ENCODE measurements at regions of chr13 and their contacts with region 1.

Region 1: DNA sequence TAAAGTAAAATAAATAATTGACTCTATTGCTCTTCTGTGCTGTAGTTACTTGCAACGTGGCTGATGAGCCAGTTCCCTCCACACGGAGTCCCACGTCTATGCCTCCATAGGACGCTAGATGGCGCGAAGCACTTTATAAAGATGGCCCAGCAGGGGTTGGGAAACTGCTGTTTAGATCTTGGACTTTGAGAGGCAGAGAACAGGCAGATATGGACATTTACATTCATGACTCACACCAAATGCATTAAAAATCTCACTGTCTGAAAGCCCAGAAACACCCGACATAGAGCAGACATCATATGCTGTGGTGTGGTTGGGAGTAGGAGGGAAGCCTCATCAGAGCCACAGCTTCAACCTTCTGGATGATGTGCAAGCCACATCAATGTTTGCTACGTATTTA is 643.1 kb upstream of the ARGLU1 start:
- DNase-seq: peak; percentile 59
- H3K4me3 ChIP-seq: no peak overlapping the region
- H3K27ac ChIP-seq: no peak overlapping the region
- H3K4me1 ChIP-seq: no peaks in the 10 kb centered on the region
- H3K27me3 ChIP-seq: no peaks in the 10 kb centered on the region
- CTCF ChIP-seq: peak; percentile 93 to 95

Region 2: DNA sequence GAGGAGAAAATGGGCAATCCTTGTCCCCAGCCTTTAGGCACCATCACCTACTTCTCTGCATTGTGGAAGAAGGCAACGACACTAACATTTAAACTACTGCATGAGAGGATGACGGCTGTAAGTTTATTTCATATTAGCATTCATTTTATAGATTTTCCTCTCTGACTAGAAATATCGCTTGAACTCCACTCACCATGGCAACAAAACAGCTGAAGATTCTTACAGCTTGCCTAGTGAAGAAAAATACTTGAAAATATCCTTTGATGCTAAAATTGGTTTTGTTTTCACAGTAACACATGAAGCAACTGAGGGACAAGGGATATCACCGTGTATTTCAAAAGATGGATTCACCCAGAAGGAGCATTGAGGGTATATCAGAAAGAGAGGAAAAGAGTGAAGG is 720.0 kb after region 1 on chr13:
- CTCF ChIA-PET with region 1: no interaction called
- dilution Hi-C with region 1: no loop called
- in situ Hi-C with region 1: no loop called
- intact Hi-C with region 1: no loop called
- DNase-seq: no peak
- H3K4me3 ChIP-seq: no peak overlapping the region
- H3K27ac ChIP-seq: no peak overlapping the region
- H3K4me1 ChIP-seq: no peaks in the 10 kb centered on the region
- H3K27me3 ChIP-seq: no peaks in the 10 kb centered on the region
- CTCF ChIP-seq: no peak

Region 3: GRCh38 chr13:108155185-108156106 is 944.4 kb after region 1 on chr13:
- CTCF ChIA-PET with region 1: no interaction called
- dilution Hi-C with region 1: no loop called
- in situ Hi-C with region 1: loop called (anchors 10 to 25 kb)
- intact Hi-C with region 1: loop called (anchors 1 kb)
- DNase-seq: peak; percentile 20
- H3K4me3 ChIP-seq: no peak overlapping the region
- H3K27ac ChIP-seq: no peak overlapping the region
- H3K4me1 ChIP-seq: no peaks in the 10 kb centered on the region
- H3K27me3 ChIP-seq: no peaks in the 10 kb centered on the region
- CTCF ChIP-seq: peak; percentile 79 to 85

Measured in mammary epithelial cell (primary cell).